ENCODE measurements at regions of chr14 and their contacts with region 1.

Region 1: GRCh38 chr14:71290960-71291466 is 383.8 kb downstream of the PCNX1 start:
- DNase-seq: peak; percentile 99
- ATAC-seq: peak; percentile 95
- H3K4me3 ChIP-seq: no peak overlapping the region; the same call in 1 of the 2 replicates
- H3K27ac ChIP-seq: peak overlapping the region; percentile 94
- H3K4me1 ChIP-seq: peaks cover 46% of the 10 kb centered on the region
- H3K27me3 ChIP-seq: no peaks in the 10 kb centered on the region
- CTCF ChIP-seq: no peak

Region 2: GRCh38 chr14:71221119-71221518 is 69.9 kb before region 1 on chr14:
- CTCF ChIA-PET with region 1: no interaction called
- POLR2A ChIA-PET with region 1: no interaction called
- intact Hi-C with region 1: loop called (anchors 2 kb)
- DNase-seq: no peak
- ATAC-seq: no peak
- H3K4me3 ChIP-seq: no peak overlapping the region
- H3K27ac ChIP-seq: no peak overlapping the region
- H3K4me1 ChIP-seq: peaks cover 13% of the 10 kb centered on the region
- H3K27me3 ChIP-seq: no peaks in the 10 kb centered on the region
- CTCF ChIP-seq: peak; percentile 27; the same call in 1 of the 2 replicates

Region 3: GRCh38 chr14:71267007-71267513 is 24.0 kb before region 1 on chr14:
- CTCF ChIA-PET with region 1: no interaction called
- POLR2A ChIA-PET with region 1: no interaction called
- intact Hi-C with region 1: no loop called
- DNase-seq: peak; percentile 27
- ATAC-seq: peak; percentile 61
- H3K4me3 ChIP-seq: no peak overlapping the region
- H3K27ac ChIP-seq: no peak overlapping the region
- H3K4me1 ChIP-seq: peaks cover 8% of the 10 kb centered on the region; the same call in 1 of the 2 replicates
- H3K27me3 ChIP-seq: no peaks in the 10 kb centered on the region
- CTCF ChIP-seq: no peak

Region 4: GRCh38 chr14:71478542-71478941 is 187.5 kb after region 1 on chr14:
- CTCF ChIA-PET with region 1: no interaction called
- POLR2A ChIA-PET with region 1: no interaction called
- intact Hi-C with region 1: no loop called
- DNase-seq: no peak
- ATAC-seq: no peak
- H3K4me3 ChIP-seq: no peak overlapping the region
- H3K27ac ChIP-seq: no peak overlapping the region
- H3K4me1 ChIP-seq: no peaks in the 10 kb centered on the region
- H3K27me3 ChIP-seq: no peaks in the 10 kb centered on the region
- CTCF ChIP-seq: no peak

Measured in PC-3 (cell line).